K562 (cell line): ENCODE measurements at regions of chr6 and their contacts with region 1.

Region 1: GRCh38 chr6:33317669-33318425 is at the start of gene ZBTB22:
- DNase-seq: peak; percentile 90 to 100 (median 94)
- ATAC-seq: peak; percentile 82
- H3K4me3 ChIP-seq: peak within 1 kb of the TSS; percentile 63
- H3K27ac ChIP-seq: peak within 1 kb of the TSS; percentile 79
- H3K4me1 ChIP-seq: peaks cover 56 to 76% of the 10 kb centered on the region in 2 experiments
- H3K27me3 ChIP-seq: no peaks in the 10 kb centered on the region
- CTCF ChIP-seq: peak in 1 of 3 experiments; percentile 17; a peak in 1 of 6 replicates
- EP300 ChIP-seq: no peak
- POLR2A ChIP-seq: peak; percentile 72
- RAD21 ChIP-seq: no peak
- polyA plus RNA-seq, gene ZBTB22: 0.21 to 0.30 TPM

Region 2: DNA sequence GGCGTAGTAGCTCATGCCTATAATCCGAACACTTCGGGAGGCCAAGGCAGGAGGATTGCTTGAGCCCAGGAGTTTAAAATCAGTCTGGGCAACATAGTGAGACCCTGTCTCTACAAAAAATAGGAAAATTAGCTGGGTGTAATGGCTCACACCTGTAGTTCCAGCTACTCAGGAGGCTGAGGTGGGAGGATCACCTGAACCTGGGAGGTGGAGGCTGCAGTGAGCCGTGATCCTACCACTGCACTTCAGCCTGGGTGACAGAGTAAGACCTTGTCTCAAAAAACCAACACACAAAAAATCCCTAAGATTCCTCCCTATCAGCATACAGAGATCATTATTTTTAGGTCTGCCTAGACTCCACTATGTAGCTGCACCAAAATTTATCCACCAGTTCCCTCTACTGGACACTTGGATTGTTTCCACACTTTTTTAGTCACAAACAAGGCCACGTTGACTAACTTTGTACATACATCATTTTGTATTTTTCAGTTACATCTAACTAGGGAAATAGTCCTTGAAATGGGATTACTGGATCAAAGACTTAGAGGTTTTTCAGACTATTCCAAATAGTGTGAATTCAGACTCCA is 89.4 kb after region 1 on chr6:
- CTCF ChIA-PET with region 1: no interaction called
- POLR2A ChIA-PET with region 1: no interaction called
- in situ Hi-C with region 1: no loop called
- intact Hi-C with region 1: no loop called
- DNase-seq: peak in 2 of 4 experiments; percentile 22 to 63
- ATAC-seq: no peak
- H3K4me3 ChIP-seq: no peak overlapping the region
- H3K27ac ChIP-seq: peak overlapping the region; percentile 21; the same call in 1 of the 3 replicates
- H3K4me1 ChIP-seq: peaks cover 9 to 20% of the 10 kb centered on the region in 2 experiments; a peak in 4 of 5 replicates
- H3K27me3 ChIP-seq: no peaks in the 10 kb centered on the region
- CTCF ChIP-seq: peak; percentile 56 to 83 (median 59); a peak in 5 of 6 replicates
- EP300 ChIP-seq: no peak
- POLR2A ChIP-seq: no peak
- RAD21 ChIP-seq: peak; percentile 77 to 82

Region 3: DNA sequence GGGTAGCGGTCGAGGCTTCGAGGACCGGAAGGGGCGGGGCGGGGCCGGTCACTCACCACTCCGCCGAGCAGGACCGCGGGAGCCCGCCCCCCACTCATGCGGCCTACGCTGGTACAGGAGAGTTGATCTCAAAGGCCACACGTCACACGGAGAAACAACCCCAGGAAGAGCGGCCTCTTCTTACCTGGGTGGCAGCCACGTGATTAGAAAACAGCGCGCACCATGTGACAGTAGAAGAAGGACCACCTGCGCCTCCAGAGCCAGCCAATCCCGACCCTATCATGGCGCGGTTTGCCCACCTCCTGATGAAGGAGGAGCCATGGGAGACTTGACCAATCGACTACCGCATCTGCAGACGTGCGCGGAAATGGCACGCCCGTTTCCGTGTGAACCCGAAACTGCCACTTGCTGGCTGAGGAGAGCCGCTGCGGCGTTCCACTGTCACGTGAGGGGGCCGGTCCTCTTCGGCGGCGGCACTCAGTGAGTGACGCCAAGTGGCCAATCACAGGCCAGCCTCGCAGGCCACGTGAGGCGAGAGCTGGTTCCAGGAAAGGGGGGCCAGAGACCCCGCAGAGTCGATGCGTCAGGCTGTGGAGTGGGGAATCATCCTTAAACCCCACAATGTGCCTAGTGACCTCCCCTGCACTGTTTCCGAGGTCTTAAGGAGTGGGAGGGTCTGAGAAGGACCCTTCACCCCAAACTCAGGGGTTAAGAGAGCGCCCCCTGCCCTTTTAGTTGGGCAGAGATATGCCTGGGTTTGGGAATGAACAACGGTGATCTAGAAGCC is 100.2 kb after region 1 on chr6 and contains the start of gene CUTA:
- CTCF ChIA-PET with region 1: no interaction called
- POLR2A ChIA-PET with region 1: interaction called, 10 read pairs
- in situ Hi-C with region 1: no loop called
- intact Hi-C with region 1: no loop called
- DNase-seq: peak; percentile 95 to 100 (median 97)
- ATAC-seq: peak; percentile 93
- H3K4me3 ChIP-seq: peak within 1 kb of the TSS; percentile 84
- H3K27ac ChIP-seq: peak within 1 kb of the TSS; percentile 95
- H3K4me1 ChIP-seq: peaks cover 40 to 43% of the 10 kb centered on the region in 2 experiments
- H3K27me3 ChIP-seq: no peaks in the 10 kb centered on the region
- CTCF ChIP-seq: peak; percentile 35 to 80 (median 52); a peak in 4 of 6 replicates
- EP300 ChIP-seq: peak; percentile 33; the same call in 1 of the 2 replicates
- POLR2A ChIP-seq: peak; percentile 87
- RAD21 ChIP-seq: 0 out of 4 replicates have a peak, but pooled peaks of 1 of the 2 experiments have one; percentile 12
- polyA plus RNA-seq, gene CUTA: 653 to 682 TPM

Region 4: DNA sequence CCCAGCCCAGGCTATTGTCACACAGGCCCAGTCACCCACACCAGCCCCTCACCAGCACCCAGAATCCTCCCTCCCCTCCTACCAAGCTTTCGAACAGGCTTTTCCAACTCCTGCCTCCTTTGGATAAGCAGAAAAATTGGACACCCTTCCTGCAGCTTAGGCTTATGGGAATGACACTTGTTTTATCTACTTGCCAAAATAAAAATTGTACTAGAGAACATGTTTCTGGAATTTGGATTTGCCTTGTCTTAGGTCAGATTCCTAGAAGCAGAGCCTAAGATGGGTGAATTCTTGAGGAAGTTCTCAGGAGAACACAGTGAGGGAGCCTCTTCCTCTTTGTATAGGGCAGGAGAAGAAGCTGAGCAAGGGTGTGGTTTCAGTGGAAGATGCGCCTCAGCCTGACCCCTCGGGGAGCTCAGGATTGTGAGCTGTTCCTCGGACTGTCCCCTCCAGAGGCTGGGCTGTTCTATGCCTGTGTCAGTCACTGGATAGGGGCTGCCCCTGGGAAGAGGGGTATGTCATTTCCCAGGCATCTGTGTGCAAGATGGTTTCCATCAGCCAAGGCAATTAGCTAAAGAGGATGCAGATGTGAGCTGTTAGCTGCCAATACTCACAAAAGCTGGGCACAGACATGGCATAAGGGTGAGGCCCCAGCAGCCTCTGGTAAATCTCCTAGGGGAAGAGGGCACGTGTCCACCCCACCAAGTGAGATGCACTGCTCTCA is 337.1 kb after region 1 on chr6:
- CTCF ChIA-PET with region 1: no interaction called
- POLR2A ChIA-PET with region 1: no interaction called
- in situ Hi-C with region 1: no loop called
- intact Hi-C with region 1: no loop called
- DNase-seq: no peak
- ATAC-seq: no peak
- H3K4me3 ChIP-seq: no peak overlapping the region
- H3K27ac ChIP-seq: no peak overlapping the region
- H3K4me1 ChIP-seq: peaks cover 0 to 4% of the 10 kb centered on the region in 2 experiments; a peak in 1 of 5 replicates
- H3K27me3 ChIP-seq: no peaks in the 10 kb centered on the region
- CTCF ChIP-seq: no peak
- EP300 ChIP-seq: no peak
- POLR2A ChIP-seq: no peak
- RAD21 ChIP-seq: no peak